ENCODE measurements at regions of chr10 and their contacts with region 1.

Region 1: DNA sequence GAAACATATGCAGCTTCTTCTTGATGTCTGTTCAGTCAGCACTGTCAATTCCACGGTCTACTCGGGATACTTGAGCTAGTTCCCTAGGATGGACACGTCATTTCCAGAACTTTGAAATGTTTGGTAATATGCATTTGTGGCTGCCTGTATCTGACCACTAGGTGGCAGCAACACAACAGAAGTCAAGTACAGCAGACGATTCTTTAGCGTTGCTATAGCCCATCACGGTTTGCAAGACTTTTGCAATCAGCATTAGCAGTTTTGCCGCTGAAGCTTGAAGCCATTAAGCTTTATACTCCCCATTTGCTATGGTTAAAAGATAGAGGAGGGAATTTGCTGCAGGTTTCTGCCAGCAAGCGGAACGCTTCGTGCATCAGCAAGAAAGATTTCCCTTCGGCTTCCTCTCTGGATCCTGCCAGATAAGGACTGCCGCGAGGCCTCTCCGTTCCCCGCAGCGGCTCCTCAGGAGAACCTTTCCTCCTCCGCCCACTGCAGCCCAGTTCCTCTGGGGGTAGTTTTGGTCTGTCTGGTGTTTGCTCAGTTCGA is 63.5 kb downstream of the ABCC2 start:
- DNase-seq: peak; percentile 55
- H3K4me3 Mint-ChIP-seq: no peak overlapping the region
- H3K27ac Mint-ChIP-seq: no peak overlapping the region
- H3K4me1 Mint-ChIP-seq: no peaks in the 10 kb centered on the region
- H3K27me3 Mint-ChIP-seq: peaks cover 8% of the 10 kb centered on the region

Region 2: DNA sequence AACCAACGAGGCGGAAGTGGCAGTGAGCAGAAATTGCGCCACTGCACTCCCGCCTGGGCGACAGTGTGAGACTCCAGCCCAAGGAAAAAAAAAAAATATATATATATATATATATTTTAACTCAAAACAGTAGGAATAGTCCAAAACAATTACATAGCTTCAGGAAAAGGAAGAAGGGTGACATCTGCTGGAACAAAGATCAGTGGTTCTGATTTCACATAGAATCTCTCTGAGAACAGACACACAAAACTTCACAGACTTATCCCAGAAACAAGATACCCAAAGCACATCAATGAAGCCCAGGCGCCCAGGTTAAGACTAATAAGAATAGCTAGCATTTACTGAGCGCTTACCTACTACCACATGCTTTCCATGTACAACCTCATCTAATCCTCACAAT is 118.9 kb after region 1 on chr10:
- intact Hi-C with region 1: loop called (anchors 1 kb)
- DNase-seq: no peak
- H3K4me3 Mint-ChIP-seq: no peak overlapping the region
- H3K27ac Mint-ChIP-seq: no peak overlapping the region
- H3K4me1 Mint-ChIP-seq: peaks cover 6% of the 10 kb centered on the region
- H3K27me3 Mint-ChIP-seq: no peaks in the 10 kb centered on the region

Region 3: DNA sequence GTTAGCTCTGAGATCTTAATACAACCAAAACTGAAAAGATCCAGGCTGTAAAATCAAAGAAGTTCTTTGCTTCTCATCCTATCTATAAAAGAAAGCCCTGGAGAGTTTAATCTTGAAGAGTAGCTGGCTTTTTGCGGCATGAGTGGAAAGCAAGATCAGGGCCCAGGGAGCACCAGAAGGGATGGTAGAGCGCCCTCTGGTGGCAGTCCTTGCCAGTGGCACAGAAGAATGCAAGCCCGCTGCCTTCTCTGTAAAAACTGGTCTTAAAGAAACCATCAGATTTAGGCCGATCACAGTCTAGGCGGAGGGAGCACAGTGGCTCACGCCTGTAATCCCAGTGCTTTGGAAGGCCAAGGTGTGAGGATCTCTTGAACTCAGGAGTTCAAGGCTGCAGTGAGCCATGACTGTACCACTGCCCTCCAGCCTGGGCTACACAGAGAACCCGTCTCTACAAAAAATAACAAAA is 200.1 kb after region 1 on chr10:
- intact Hi-C with region 1: loop called (anchors 1 kb)
- DNase-seq: peak; percentile 59
- H3K4me3 Mint-ChIP-seq: no peak overlapping the region
- H3K27ac Mint-ChIP-seq: no peak overlapping the region
- H3K4me1 Mint-ChIP-seq: peaks cover 2% of the 10 kb centered on the region
- H3K27me3 Mint-ChIP-seq: peaks cover 3% of the 10 kb centered on the region